OCI-LY7 (cell line): ENCODE measurements at regions of chr22 and their contacts with region 1.

Region 1: GRCh38 chr22:50303848-50304527 is 3.5 kb downstream of the PLXNB2 start:
- DNase-seq: peak; percentile 38
- H3K4me3 ChIP-seq: no peak overlapping the region
- H3K27ac ChIP-seq: peak overlapping the region; percentile 27
- H3K4me1 ChIP-seq: peaks cover 95% of the 10 kb centered on the region
- CTCF ChIP-seq: peak; percentile 36; the same call in 1 of the 2 replicates

Region 2: DNA sequence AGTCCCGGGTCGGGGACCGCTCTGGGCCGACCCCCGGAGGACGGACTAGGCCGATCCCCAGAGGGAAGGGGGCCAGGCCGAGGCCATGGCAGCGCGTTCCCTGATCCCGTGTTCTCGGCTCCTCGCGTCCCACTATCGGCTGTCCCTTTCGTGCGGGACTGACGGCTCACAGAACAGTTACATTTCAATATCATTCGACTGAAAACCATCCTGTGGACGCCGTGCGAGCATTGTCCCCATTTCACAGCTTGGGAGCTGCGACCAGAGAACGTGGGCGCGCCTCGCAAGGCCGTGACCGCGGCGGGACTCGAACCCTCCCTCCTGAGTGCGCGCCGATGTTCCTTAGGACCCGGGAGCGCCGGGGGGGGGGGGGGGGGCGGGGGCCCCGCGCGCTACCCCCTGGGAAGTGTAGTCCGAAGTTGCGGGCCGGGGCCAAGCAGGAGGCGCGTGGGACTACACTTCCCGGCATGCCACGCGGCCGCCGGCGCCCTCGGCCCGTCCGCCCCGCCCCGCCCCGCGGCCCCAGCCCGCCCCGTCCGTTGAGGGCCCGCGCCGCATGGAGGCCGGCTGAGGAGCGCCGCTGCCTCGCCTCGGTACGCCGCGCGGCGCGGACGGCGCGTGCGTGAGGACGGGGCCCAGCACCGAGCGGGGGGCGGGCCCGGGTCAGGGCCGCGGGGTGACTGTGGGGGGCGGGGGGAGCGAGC is 118.5 kb before region 1 on chr22 and contains the start of gene TRABD:
- CTCF ChIA-PET with region 1: no interaction called
- POLR2A ChIA-PET with region 1: no interaction called
- intact Hi-C with region 1: no loop called
- DNase-seq: peak; percentile 95
- H3K4me3 ChIP-seq: peak within 1 kb of the TSS; percentile 81
- H3K27ac ChIP-seq: peak within 1 kb of the TSS; percentile 99
- H3K4me1 ChIP-seq: peaks cover 38% of the 10 kb centered on the region
- CTCF ChIP-seq: no peak
- total RNA-seq, gene TRABD: 111 and 126 TPM in 2 replicates

Region 3: DNA sequence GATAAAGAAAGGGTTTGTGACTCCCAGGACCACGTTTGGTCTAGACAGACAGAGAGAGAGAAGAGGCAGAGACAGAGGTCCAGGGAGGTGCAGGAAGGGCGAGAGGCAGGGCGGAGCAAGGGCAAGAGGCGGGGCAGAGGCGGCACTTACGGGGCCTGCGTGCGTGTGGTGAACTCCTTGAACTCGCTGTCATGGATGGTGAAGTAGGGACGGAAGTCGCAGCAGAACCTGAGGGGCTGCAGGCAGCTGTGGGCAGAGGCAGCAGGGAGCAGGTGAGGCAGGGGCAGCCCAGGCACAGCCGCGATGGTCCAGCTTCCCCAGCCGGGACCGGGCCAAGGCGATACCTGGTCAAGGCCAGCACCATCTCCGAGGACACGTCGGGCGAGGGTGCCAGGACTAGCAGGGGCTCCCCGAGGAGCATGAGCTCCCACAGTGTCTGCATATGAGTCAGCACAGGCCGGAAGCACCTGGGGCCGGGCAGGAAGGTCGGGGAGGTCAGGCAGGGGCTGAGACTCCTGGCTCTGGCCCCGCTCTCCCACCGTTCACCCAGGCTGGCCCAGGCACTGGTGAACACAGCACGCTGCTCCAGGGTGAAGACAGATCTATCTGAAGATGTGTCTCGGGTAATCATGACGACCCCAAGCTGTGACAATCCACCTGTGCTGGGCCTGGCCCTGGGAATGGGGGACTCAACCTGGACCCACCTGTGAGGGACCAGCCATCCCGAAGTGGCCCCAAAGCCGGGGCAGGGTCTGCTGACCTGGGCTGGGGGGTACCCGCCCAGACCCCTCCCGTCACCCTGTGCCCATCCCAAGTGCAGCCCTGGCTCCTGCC is 10.7 kb after region 1 on chr22:
- CTCF ChIA-PET with region 1: interaction called, 3 read pairs
- POLR2A ChIA-PET with region 1: interaction called, 10 read pairs
- intact Hi-C with region 1: no loop called
- DNase-seq: peak; percentile 93
- H3K4me3 ChIP-seq: peak overlapping the region; percentile 71
- H3K27ac ChIP-seq: peak overlapping the region; percentile 91
- H3K4me1 ChIP-seq: peaks cover 64% of the 10 kb centered on the region
- CTCF ChIP-seq: no peak